T-cell (primary cell): ENCODE measurements at regions of chr12 and their contacts with region 1.

Region 1: GRCh38 chr12:55659486-55660385 is 23.0 kb downstream of the OR10P1 start:
- DNase-seq: peak in 1 of 35 experiments; percentile 29
- ATAC-seq: no peak
- H3K4me3 ChIP-seq: no peak overlapping the region
- H3K4me3 Mint-ChIP-seq: no peak overlapping the region
- H3K27ac ChIP-seq: no peak overlapping the region
- H3K27ac Mint-ChIP-seq: no peak overlapping the region
- H3K4me1 ChIP-seq: no peaks in the 10 kb centered on the region
- H3K4me1 Mint-ChIP-seq: peaks cover 0 to 4% (median 2%) of the 10 kb centered on the region in 3 donors
- H3K27me3 ChIP-seq: peaks cover 0 to 8% of the 10 kb centered on the region in 2 experiments
- H3K27me3 Mint-ChIP-seq: no peaks in the 10 kb centered on the region

Region 2: DNA sequence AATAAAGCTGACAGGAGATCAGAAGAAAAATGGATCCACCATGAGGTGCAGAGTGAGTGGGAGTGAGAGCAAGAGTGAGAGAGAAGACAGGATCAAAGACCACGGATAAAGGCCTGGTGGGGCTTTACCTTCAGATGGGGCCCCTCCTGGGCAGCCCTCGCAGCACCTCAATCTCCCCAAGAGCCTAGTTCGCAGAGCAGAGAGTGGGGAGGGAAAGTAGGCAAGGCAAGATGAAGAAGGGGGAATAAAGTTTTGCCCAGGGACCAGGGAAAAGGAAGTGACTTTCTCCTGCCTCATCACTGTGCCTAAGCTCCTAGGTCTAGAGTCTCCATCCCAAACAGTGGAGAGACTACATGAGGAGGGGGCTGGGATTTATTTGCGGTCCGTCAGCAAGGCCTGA is 12.7 kb before region 1 on chr12:
- CTCF ChIA-PET with region 1: interaction called, 21 to 37 read pairs
- POLR2A ChIA-PET with region 1: interaction called in 1 of 2 experiments, 5 read pairs
- DNase-seq: no peak
- ATAC-seq: no peak
- H3K4me3 ChIP-seq: no peak overlapping the region
- H3K4me3 Mint-ChIP-seq: no peak overlapping the region
- H3K27ac ChIP-seq: peak overlapping the region; percentile 74
- H3K27ac Mint-ChIP-seq: peak overlapping the region; percentile 54 to 75
- H3K4me1 ChIP-seq: peaks cover 0 to 15% of the 10 kb centered on the region in 2 experiments
- H3K4me1 Mint-ChIP-seq: peaks cover 15 to 28% (median 18%) of the 10 kb centered on the region in 3 donors
- H3K27me3 ChIP-seq: no peaks in the 10 kb centered on the region
- H3K27me3 Mint-ChIP-seq: no peaks in the 10 kb centered on the region

Region 3: DNA sequence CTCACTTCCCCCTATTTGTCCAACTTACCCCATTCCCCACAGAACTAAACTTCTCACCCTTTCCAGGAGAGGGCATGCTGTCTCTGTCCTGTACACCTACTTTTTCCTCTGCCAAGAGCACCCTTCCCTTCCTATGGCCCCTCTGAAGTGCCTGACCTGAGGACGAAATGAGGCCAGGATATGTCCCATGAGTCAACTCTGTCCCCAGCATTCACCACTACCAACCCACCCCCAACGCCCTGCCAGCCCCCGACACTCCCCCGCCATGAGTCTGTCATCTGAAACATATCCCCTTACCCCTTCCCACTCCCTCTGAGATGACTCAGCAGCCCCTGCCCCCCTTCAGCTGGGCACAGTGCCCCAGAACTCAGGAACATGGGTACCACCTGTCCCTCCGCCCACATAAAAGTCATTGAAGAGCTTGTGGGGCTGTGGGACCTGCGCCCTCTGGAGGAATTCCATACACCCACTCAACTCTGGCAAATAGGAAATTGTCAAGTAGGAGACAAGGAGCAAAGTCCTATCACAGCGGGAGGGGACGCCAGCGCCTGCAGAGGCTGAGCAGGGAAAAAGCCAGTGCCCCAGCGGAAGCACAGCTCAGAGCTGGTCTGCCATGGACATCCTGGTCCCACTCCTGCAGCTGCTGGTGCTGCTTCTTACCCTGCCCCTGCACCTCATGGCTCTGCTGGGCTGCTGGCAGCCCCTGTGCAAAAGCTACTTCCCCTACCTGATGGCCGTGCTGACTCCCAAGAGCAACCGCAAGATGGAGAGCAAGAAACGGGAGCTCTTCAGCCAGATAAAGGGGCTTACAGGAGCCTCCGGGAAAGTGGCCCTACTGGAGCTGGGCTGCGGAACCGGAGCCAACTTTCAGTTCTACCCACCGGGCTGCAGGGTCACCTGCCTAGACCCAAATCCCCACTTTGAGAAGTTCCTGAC is 21.7 kb after region 1 on chr12:
- CTCF ChIA-PET with region 1: no interaction called
- POLR2A ChIA-PET with region 1: no interaction called
- DNase-seq: no peak
- ATAC-seq: peak in 3 of 4 experiments; percentile 34 to 44 (median 38)
- H3K4me3 ChIP-seq: no peak overlapping the region
- H3K4me3 Mint-ChIP-seq: peak overlapping the region in 1 of 3 donors; percentile 46
- H3K27ac ChIP-seq: no peak overlapping the region
- H3K27ac Mint-ChIP-seq: no peak overlapping the region
- H3K4me1 ChIP-seq: peaks cover 0 to 9% of the 10 kb centered on the region in 2 experiments
- H3K4me1 Mint-ChIP-seq: peaks cover 9 to 22% (median 12%) of the 10 kb centered on the region in 3 donors
- H3K27me3 ChIP-seq: peaks cover 0 to 36% of the 10 kb centered on the region in 2 experiments
- H3K27me3 Mint-ChIP-seq: peaks cover 33 to 35% of the 10 kb centered on the region in 2 donors